CD8-positive, alpha-beta T cell (primary cell): ENCODE measurements at regions of chr20 and their contacts with region 1.

Region 1: DNA sequence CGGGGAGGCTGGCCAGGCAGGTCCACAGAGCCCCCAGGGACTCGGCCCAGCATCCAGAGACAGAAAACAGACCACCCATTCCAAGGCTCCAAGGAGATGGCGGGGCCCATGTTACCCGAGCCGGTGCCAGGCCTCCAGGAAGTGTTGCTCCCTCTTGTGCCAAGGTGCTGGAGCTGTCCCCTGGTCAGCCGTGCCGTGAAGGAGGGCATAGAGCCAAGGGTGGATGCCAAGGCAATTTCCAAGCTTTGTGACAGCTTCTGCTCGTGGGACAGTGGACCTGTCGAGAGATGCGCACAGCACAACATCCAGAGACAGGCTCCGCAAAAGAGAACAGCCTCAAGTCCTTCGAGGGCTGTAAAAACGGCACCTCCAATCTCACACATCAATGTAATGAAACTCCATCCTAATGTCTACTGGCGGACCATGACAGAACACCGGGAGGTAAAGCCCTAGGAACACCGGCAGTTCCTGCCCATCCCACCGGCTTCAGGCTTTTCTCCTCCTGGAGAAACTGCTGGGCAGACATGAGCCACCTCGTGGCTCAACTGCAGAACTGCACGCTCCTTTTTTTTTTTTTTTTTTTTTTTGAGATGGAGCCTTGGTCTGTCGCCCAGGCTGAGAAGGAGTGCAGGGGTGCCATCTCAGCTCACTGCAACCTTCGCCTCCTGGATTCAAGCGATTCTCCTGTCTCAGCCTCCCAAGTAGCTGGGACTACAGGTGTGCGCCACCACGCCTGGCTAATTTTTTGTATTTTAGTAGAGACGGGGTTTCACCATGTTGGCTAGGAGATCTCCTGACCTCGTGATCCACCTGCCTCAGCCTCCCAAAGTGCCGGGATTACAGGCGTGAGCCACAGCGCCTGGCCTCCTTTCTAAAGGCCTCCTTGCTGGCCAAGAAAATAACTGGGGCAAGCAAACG is 30.9 kb upstream of the AVP start:
- DNase-seq: peak in 5 of 9 experiments; percentile 18 to 70 (median 60)
- ATAC-seq: peak; percentile 77
- H3K4me3 ChIP-seq: no peak overlapping the region
- H3K4me3 Mint-ChIP-seq: no peak overlapping the region
- H3K27ac ChIP-seq: no peak overlapping the region
- H3K27ac Mint-ChIP-seq: peak overlapping the region; percentile 69
- H3K4me1 ChIP-seq: peaks cover 7% of the 10 kb centered on the region
- H3K4me1 Mint-ChIP-seq: peaks cover 23% of the 10 kb centered on the region
- H3K27me3 ChIP-seq: no peaks in the 10 kb centered on the region
- H3K27me3 Mint-ChIP-seq: no peaks in the 10 kb centered on the region
- CTCF ChIP-seq: peak; percentile 95

Region 2: GRCh38 chr20:3059489-3059888 is 56.0 kb before region 1 on chr20:
- CTCF ChIA-PET with region 1: interaction called, 35 read pairs
- POLR2A ChIA-PET with region 1: no interaction called
- intact Hi-C with region 1: loop called (anchors 1 kb)
- DNase-seq: no peak
- ATAC-seq: no peak
- H3K4me3 ChIP-seq: no peak overlapping the region
- H3K4me3 Mint-ChIP-seq: no peak overlapping the region
- H3K27ac ChIP-seq: no peak overlapping the region
- H3K27ac Mint-ChIP-seq: no peak overlapping the region
- H3K4me1 ChIP-seq: no peaks in the 10 kb centered on the region
- H3K4me1 Mint-ChIP-seq: peaks cover 6% of the 10 kb centered on the region
- H3K27me3 ChIP-seq: no peaks in the 10 kb centered on the region
- H3K27me3 Mint-ChIP-seq: no peaks in the 10 kb centered on the region
- CTCF ChIP-seq: no peak

Region 3: GRCh38 chr20:3092611-3093379 is 22.7 kb before region 1 on chr20:
- CTCF ChIA-PET with region 1: interaction called, 4 read pairs
- POLR2A ChIA-PET with region 1: interaction called, 3 read pairs
- intact Hi-C with region 1: loop called (anchors 1 to 2 kb)
- DNase-seq: peak; percentile 23 to 76 (median 52)
- ATAC-seq: peak; percentile 39
- H3K4me3 ChIP-seq: peak overlapping the region; percentile 33 to 61
- H3K4me3 Mint-ChIP-seq: peak overlapping the region; percentile 88
- H3K27ac ChIP-seq: peak overlapping the region; percentile 77 to 90
- H3K27ac Mint-ChIP-seq: peak overlapping the region; percentile 100
- H3K4me1 ChIP-seq: peaks cover 43% of the 10 kb centered on the region
- H3K4me1 Mint-ChIP-seq: peaks cover 29% of the 10 kb centered on the region
- H3K27me3 ChIP-seq: peaks cover 0 to 14% of the 10 kb centered on the region in 2 experiments
- H3K27me3 Mint-ChIP-seq: peaks cover 8% of the 10 kb centered on the region
- CTCF ChIP-seq: no peak

Region 4: DNA sequence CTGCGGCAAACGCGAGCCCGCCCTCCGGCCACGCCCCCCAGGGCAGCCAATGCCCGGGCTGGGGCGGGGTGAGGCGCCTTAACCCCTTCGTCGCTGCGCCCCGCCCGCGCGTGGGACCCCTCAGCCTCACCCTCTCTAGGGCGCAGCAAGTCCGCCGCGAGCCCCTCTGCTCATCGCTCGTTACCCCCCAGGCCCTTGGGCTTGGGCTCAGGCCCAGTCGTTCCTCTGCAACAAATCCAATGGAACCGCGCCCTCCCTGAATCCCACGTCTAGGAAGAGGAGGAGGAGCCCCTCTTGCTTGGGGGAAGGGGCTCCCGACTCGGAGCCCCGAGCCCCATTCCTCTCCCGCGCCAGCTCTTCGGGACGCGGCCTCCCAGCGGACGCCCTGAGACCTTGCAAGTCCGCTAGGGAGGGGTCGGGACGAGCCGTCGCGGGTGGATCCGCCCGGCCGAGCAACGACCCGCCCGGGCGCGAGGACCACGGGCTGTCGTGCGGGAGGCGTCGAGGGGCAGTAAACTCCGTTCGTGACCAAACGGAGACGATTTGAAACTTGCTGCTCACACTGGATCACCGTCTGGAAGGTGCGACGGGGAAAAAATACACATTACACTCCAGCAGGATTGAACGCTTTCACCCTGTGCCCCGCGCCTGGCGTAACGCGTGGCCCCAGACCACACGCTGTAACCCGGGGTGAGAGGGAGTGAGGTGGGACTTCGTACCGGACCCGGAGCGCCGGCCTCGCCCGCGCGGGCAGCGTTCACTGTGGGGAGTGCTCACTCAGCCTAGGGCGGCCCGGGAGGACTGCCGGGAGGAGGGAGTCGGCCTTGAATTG is 58.4 kb after region 1 on chr20:
- CTCF ChIA-PET with region 1: interaction called, 3 read pairs
- POLR2A ChIA-PET with region 1: no interaction called
- intact Hi-C with region 1: loop called (anchors 1 to 5 kb)
- DNase-seq: peak; percentile 45 to 95 (median 90)
- ATAC-seq: peak; percentile 10
- H3K4me3 ChIP-seq: peak overlapping the region; percentile 81 to 96
- H3K4me3 Mint-ChIP-seq: peak overlapping the region; percentile 82
- H3K27ac ChIP-seq: peak overlapping the region in 1 of 2 experiments; percentile 97
- H3K27ac Mint-ChIP-seq: peak overlapping the region; percentile 62
- H3K4me1 ChIP-seq: peaks cover 13% of the 10 kb centered on the region
- H3K4me1 Mint-ChIP-seq: peaks cover 17% of the 10 kb centered on the region
- H3K27me3 ChIP-seq: peaks cover 0 to 7% of the 10 kb centered on the region in 2 experiments
- H3K27me3 Mint-ChIP-seq: peaks cover 10% of the 10 kb centered on the region
- CTCF ChIP-seq: no peak

Region 5: DNA sequence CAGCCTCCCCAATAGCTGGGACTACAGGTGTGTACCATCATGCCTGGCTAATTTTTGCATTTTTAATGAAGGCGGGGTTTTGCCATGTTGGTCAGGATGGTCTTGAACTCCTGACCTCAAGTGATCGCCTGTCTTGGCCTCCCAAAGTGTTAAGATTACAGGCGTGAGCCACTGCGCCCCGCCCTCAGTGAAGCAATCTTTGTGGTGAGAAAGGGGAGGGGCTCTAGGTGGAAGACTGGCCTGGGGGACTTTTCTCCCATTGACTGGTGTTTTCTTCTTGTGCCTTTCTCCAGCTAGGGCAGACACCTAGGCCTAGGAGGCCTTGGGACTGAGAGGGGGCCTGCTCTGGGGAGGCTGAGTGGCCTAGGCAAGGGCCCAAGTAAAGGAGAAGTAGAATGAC is 207.9 kb after region 1 on chr20:
- CTCF ChIA-PET with region 1: no interaction called
- POLR2A ChIA-PET with region 1: no interaction called
- intact Hi-C with region 1: no loop called
- DNase-seq: peak in 2 of 9 experiments; percentile 11 to 28
- ATAC-seq: no peak
- H3K4me3 ChIP-seq: no peak overlapping the region
- H3K4me3 Mint-ChIP-seq: no peak overlapping the region
- H3K27ac ChIP-seq: no peak overlapping the region
- H3K27ac Mint-ChIP-seq: no peak overlapping the region
- H3K4me1 ChIP-seq: peaks cover 11% of the 10 kb centered on the region
- H3K4me1 Mint-ChIP-seq: peaks cover 14% of the 10 kb centered on the region
- H3K27me3 ChIP-seq: no peaks in the 10 kb centered on the region
- H3K27me3 Mint-ChIP-seq: no peaks in the 10 kb centered on the region
- CTCF ChIP-seq: no peak